GM10248 (cell line): ENCODE measurements at regions of chr11 and their contacts with region 1.

Region 1: GRCh38 chr11:68040101-68040956 is 1.5 kb downstream of the TCIRG1 start:
- DNase-seq: peak; percentile 85
- CTCF ChIP-seq: no peak

Region 2: GRCh38 chr11:68051191-68052144 is 11.1 kb after region 1 on chr11:
- CTCF ChIA-PET with region 1: interaction called, 13 read pairs
- POLR2A ChIA-PET with region 1: interaction called, 5 read pairs
- DNase-seq: no peak
- CTCF ChIP-seq: no peak

Region 3: GRCh38 chr11:68106165-68106957 is 66.0 kb after region 1 on chr11:
- CTCF ChIA-PET with region 1: no interaction called
- POLR2A ChIA-PET with region 1: no interaction called
- DNase-seq: no peak
- CTCF ChIP-seq: no peak